HepG2 (cell line): ENCODE measurements at regions of chr4 and their contacts with region 1.

Region 1: DNA sequence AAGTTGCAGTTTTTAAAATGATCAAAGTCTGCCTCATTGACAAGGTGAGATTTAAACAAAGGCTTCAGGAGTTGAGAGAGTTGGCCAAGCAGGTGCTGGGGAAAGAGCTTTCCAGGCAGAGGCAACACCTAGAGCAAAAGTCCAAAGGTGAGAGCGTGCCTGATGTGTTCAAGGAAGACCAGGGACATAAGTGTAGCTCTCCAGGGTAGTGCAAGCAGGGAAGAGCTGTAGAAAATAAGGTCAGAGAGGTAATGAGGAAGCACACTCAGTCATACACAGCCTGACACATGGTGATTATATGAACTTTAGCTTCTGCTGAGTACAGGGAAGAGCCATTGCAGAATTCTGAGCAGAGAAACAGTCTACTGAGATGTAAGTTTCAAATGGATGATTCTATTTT is 265.0 kb upstream of the NWD2 start:
- DNase-seq: no peak
- ATAC-seq: no peak
- H3K4me3 ChIP-seq: no peak overlapping the region
- H3K27ac ChIP-seq: no peak overlapping the region
- H3K4me1 ChIP-seq: no peaks in the 10 kb centered on the region
- H3K27me3 ChIP-seq: no peaks in the 10 kb centered on the region
- CTCF ChIP-seq: no peak
- EP300 ChIP-seq: no peak
- POLR2A ChIP-seq: no peak
- RAD21 ChIP-seq: no peak

Region 2: DNA sequence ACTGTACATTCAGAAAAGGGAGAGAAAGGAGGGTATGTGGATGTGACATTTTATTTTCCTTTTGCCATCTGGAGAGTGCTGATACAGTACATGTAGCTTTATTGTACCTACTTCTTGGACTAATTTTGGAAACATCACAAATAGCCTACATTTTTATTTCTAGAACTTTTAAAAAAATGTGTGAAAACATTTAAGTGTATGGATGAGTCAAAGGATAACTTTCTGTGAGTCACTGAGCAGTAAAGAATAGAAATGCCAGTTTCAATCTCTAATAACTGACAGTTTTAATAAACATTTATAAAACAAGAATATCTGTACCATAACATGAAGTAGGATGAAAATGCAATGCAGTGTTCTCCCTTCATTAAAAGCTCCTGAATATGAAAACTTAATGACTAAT is 109.4 kb before region 1 on chr4:
- CTCF ChIA-PET with region 1: no interaction called
- POLR2A ChIA-PET with region 1: no interaction called
- in situ Hi-C with region 1: no loop called
- intact Hi-C with region 1: no loop called
- DNase-seq: no peak
- ATAC-seq: no peak
- H3K4me3 ChIP-seq: no peak overlapping the region
- H3K27ac ChIP-seq: no peak overlapping the region
- H3K4me1 ChIP-seq: no peaks in the 10 kb centered on the region
- H3K27me3 ChIP-seq: no peaks in the 10 kb centered on the region
- CTCF ChIP-seq: no peak
- EP300 ChIP-seq: no peak
- POLR2A ChIP-seq: no peak
- RAD21 ChIP-seq: no peak

Region 3: DNA sequence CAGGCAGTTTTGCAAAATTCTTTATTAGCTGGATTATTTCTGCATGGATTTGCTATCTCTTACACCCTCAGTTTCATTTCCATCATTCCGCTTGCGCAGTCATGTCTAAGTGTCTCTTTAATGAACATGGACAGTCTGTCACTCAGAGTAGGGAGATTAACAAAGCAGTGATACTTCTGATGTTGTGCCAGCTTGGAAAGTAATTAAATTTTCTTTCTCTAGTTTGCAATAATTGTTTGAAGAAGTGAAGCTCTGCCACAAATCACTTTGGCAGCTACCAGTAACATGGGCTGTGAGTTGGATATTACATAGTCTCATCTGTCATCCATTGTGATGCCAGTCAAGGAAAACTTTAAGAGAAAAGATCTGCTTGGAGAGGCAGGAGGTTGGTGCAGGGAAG is 59.8 kb before region 1 on chr4:
- CTCF ChIA-PET with region 1: no interaction called
- POLR2A ChIA-PET with region 1: no interaction called
- in situ Hi-C with region 1: no loop called
- intact Hi-C with region 1: loop called (anchors 2 kb)
- DNase-seq: no peak
- ATAC-seq: no peak
- H3K4me3 ChIP-seq: no peak overlapping the region
- H3K27ac ChIP-seq: no peak overlapping the region
- H3K4me1 ChIP-seq: no peaks in the 10 kb centered on the region
- H3K27me3 ChIP-seq: no peaks in the 10 kb centered on the region
- CTCF ChIP-seq: no peak
- EP300 ChIP-seq: no peak
- POLR2A ChIP-seq: no peak
- RAD21 ChIP-seq: no peak

Region 4: DNA sequence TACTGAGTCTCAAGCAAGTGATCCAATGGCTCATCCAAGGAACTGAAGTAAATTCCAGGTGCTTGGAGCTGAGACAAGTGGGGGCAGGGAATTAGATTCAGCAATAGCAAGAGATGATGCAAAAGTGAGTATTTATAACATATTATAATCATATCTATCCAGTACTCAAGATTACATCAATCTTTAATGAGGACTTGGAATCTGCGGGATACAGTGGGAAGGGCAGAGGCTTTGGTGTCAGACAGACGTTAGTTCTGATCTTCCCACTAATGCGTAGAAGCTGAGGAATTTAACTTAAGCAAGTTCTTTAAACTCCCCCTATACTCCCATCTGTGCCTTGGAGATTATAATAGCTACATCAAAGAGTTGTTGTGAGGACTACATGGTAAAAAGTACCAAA is 121.6 kb after region 1 on chr4:
- CTCF ChIA-PET with region 1: no interaction called
- POLR2A ChIA-PET with region 1: no interaction called
- in situ Hi-C with region 1: no loop called
- intact Hi-C with region 1: no loop called
- DNase-seq: no peak
- ATAC-seq: no peak
- H3K4me3 ChIP-seq: no peak overlapping the region
- H3K27ac ChIP-seq: no peak overlapping the region
- H3K4me1 ChIP-seq: no peaks in the 10 kb centered on the region
- H3K27me3 ChIP-seq: no peaks in the 10 kb centered on the region
- CTCF ChIP-seq: no peak
- EP300 ChIP-seq: no peak
- POLR2A ChIP-seq: no peak
- RAD21 ChIP-seq: no peak